ENCODE measurements at regions of chr19 and their contacts with region 1.

Region 1: DNA sequence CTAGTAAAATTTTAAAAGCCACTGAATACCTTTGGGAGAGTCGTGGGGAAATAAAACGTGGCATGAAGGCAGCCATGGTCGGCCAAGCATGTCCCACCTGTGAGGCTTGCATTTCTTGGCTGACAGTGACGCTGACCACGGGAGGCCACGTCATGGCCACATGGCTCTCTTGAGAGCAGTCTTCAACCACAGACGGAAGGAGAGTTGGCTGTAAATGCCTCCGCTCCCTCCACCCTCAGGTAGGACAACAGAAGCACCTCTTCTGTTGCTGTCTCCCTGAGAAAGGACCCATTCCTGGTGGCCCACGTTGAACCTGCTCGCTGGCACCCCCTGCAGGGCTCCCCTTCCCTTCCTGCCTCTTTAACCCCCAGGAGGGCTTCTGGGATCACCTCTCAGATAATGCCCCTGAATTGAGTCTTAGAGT is 10.6 kb upstream of the LRRC25 start:
- DNase-seq: peak; percentile 81
- ATAC-seq: peak; percentile 88
- H3K4me3 Mint-ChIP-seq: peak overlapping the region; percentile 53
- H3K27ac Mint-ChIP-seq: peak overlapping the region; percentile 76
- H3K4me1 Mint-ChIP-seq: peaks cover 24% of the 10 kb centered on the region
- H3K27me3 Mint-ChIP-seq: peaks cover 18% of the 10 kb centered on the region
- CTCF ChIP-seq: no peak

Region 2: DNA sequence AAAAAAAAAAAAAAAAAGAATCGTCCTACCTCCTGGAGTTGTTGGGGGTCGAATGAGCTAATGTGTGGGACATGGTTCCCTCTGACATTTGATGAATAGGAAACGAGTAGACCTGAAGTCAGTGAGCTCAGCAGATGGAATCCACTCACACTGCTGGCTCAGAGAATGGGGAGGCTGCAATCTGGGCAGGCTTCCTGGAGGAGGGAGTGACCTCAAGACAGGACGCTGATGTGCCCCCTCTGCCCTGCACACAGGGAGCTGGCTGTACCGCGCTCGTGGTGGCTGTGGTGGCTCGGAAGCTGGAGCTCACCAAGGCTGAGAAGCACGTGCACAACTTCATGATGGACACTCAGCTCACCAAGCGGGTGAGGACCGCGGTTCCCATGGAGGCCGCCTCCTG is 419.9 kb before region 1 on chr19:
- CTCF ChIA-PET with region 1: no interaction called
- POLR2A ChIA-PET with region 1: no interaction called
- intact Hi-C with region 1: no loop called
- DNase-seq: no peak
- ATAC-seq: no peak
- H3K4me3 Mint-ChIP-seq: no peak overlapping the region
- H3K27ac Mint-ChIP-seq: no peak overlapping the region
- H3K4me1 Mint-ChIP-seq: no peaks in the 10 kb centered on the region
- H3K27me3 Mint-ChIP-seq: peaks cover 2% of the 10 kb centered on the region
- CTCF ChIP-seq: no peak

Region 3: DNA sequence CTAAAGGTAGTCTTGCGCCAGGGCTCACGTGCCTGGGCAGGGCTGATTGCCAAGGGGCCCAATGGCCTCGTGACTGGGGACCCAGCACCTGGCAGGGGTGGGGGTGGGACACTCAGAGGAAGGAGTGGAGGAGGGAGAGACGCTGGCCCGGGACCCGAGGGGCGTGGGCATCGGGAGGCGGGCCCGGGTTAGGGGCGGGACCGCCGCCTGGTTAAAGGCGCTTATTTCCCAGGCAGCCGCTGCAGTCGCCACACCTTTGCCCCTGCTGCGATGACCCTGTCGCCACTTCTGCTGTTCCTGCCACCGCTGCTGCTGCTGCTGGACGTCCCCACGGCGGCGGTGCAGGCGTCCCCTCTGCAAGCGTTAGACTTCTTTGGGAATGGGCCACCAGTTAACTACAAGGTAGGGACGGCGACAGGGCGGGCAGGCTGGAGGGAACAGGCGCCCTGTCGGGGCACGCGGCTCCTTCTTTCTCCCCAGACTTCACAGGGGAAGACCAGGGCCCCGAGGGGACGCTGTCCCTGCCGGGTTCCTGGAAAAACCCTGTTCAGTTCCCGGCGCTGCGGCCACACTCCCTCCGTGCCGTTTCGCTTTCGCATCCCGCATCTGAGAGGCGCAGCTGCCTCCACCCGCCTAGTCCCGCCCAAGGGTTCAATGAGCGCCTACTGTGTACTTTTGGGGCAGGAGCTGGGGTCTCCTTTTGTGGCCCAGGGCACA is 234.3 kb before region 1 on chr19 and contains the start of gene IFI30:
- CTCF ChIA-PET with region 1: no interaction called
- POLR2A ChIA-PET with region 1: no interaction called
- intact Hi-C with region 1: no loop called
- DNase-seq: peak; percentile 85
- ATAC-seq: peak; percentile 62
- H3K4me3 Mint-ChIP-seq: peak within 1 kb of the TSS; percentile 94
- H3K27ac Mint-ChIP-seq: peak within 1 kb of the TSS; percentile 92
- H3K4me1 Mint-ChIP-seq: peaks cover 90% of the 10 kb centered on the region
- H3K27me3 Mint-ChIP-seq: no peaks in the 10 kb centered on the region
- CTCF ChIP-seq: no peak
- total RNA-seq, gene IFI30: 251 and 255 TPM in 2 replicates

Region 4: GRCh38 chr19:18286973-18287635 is 121.0 kb before region 1 on chr19:
- CTCF ChIA-PET with region 1: no interaction called
- POLR2A ChIA-PET with region 1: no interaction called
- intact Hi-C with region 1: no loop called
- DNase-seq: no peak
- ATAC-seq: no peak
- H3K4me3 Mint-ChIP-seq: no peak overlapping the region
- H3K27ac Mint-ChIP-seq: peak overlapping the region; percentile 36
- H3K4me1 Mint-ChIP-seq: peaks cover 62% of the 10 kb centered on the region
- H3K27me3 Mint-ChIP-seq: no peaks in the 10 kb centered on the region
- CTCF ChIP-seq: no peak

Region 5: DNA sequence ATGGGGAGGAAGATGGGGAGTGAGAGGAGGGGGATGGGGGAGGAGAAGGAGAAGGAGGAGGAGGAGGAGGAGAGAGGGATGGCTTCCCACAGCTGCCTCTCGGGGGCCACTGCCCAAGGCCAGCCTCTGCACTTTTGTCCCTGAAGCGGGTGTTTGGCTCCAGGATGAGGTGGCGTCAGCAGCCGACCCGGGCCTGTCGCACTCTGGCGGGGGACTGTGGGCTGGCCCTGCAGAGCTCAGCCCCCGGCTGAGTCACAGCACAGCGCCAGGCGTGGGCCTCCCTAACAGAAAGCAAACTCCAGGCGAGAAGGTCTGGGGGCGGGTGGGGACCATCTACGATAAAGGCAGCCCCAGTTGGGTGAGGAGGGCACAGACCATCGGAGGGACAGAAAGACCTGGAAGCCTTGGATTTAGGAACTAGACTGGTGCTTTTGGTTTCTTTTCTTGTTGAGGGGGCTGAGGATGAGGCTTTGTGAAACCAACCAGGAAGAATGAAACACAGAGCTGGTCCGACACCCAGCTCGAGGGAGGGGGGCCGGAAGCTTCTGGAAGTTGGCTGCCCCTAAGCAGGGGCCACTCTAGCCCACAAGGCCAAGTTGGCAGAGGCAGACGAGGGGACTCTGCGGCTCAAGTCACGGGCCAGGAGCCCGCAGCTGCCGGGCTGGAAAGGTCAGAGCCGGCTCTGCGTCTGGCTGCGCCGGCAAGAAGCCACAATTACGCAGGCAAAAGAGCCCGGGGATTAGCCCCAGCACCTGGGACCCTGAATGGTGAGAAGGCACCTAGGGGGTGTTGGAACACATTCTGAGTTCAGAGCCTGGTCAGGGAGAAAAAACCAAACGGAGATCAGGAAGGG is 103.4 kb before region 1 on chr19:
- CTCF ChIA-PET with region 1: interaction called, 3 read pairs
- POLR2A ChIA-PET with region 1: interaction called, 10 read pairs
- intact Hi-C with region 1: no loop called
- DNase-seq: peak; percentile 74
- ATAC-seq: peak; percentile 73
- H3K4me3 Mint-ChIP-seq: peak overlapping the region; percentile 85
- H3K27ac Mint-ChIP-seq: peak overlapping the region; percentile 95
- H3K4me1 Mint-ChIP-seq: peaks cover 54% of the 10 kb centered on the region
- H3K27me3 Mint-ChIP-seq: no peaks in the 10 kb centered on the region
- CTCF ChIP-seq: no peak

Region 6: DNA sequence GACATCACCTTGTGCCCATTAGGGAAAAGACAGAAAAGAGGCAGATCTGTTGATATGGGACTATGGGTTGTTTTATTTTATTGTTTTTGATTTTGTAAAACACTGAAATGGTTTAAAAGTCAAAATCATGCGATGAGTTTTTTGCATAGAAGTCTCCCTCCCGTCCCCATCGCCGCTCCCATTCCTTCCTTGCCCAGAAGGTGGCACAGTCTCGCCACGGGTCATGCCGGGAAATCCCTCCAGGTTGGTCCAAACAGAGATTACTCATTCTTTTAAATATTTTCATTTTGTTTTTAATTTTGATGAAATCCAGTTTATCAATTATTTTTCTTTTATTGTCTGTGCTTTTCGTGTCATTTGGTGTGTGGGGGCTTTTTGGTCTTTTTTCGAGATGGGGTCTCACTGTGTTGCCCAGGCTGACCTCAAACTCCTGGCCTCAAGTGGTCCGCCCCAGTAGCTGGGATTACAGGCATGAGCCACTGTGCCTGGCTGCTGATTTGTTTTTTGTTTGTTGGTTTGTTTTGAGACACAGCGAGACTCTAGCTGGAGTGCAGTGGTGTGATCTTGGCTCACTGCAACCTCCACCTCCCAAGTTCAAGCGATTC is 58.4 kb before region 1 on chr19:
- CTCF ChIA-PET with region 1: interaction called, 36 read pairs
- POLR2A ChIA-PET with region 1: no interaction called
- intact Hi-C with region 1: loop called (anchors 1 kb)
- DNase-seq: peak; percentile 28
- ATAC-seq: peak; percentile 52
- H3K4me3 Mint-ChIP-seq: no peak overlapping the region
- H3K27ac Mint-ChIP-seq: no peak overlapping the region
- H3K4me1 Mint-ChIP-seq: no peaks in the 10 kb centered on the region
- H3K27me3 Mint-ChIP-seq: no peaks in the 10 kb centered on the region
- CTCF ChIP-seq: no peak

Region 7: GRCh38 chr19:18388100-18388959 is 19.7 kb before region 1 on chr19:
- CTCF ChIA-PET with region 1: interaction called, 67 read pairs
- POLR2A ChIA-PET with region 1: interaction called, 18 read pairs
- intact Hi-C with region 1: loop called (anchors 1 kb)
- DNase-seq: peak; percentile 87
- ATAC-seq: peak; percentile 82
- H3K4me3 Mint-ChIP-seq: peak overlapping the region; percentile 76
- H3K27ac Mint-ChIP-seq: no peak overlapping the region
- H3K4me1 Mint-ChIP-seq: peaks cover 45% of the 10 kb centered on the region
- H3K27me3 Mint-ChIP-seq: peaks cover 6% of the 10 kb centered on the region
- CTCF ChIP-seq: peak; percentile 92